HCT116 (cell line): ENCODE measurements at regions of chr1 and their contacts with region 1.

Region 1: DNA sequence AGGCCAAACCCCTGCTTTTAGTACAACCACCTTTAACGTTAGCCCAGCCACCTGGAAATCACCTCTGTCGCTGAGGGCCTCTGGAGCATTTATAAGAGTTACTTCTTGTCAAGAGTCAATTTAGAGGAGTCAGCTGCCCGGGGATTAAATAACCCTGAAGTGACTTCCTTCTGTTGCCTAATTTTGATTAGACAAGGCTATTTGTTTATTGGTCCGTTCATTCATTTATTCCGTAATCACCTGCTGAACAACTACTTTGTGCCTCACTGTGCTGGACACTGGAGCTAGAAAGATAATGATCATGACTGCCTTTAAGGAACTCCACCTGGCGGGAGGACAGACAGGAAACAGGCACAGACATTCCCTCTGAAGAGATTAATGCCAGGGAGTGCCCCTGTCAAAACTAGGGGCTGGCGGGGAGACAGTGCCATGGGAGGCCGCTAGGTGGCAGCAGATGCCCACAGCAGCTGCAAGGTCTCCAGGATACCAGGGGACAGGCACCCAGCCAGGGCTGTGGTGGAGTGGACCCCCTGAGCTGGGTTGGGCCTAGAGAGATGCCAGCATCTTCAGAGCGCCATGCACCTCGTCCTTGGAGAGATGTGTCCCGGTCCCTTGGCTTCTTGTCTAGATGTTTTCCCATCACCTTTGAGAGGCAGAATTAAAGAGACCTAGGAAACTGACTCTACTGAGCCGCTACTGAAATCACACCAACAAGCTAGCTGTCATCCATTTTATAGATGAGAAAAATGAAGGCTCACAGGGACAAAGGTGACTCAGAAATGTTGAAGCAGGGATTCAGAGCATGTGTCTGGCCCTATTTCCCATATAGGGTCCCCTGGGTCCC is 3.7 kb downstream of the REN start:
- DNase-seq: peak; percentile 70
- ATAC-seq: peak; percentile 98
- H3K4me3 ChIP-seq: no peak overlapping the region
- H3K27ac ChIP-seq: no peak overlapping the region
- H3K4me1 ChIP-seq: peaks cover 0 to 15% of the 10 kb centered on the region in 2 experiments; a peak in 2 of 4 replicates
- H3K27me3 ChIP-seq: no peaks in the 10 kb centered on the region
- CTCF ChIP-seq: peak; percentile 98 to 99 (median 99)
- POLR2A ChIP-seq: no peak
- RAD21 ChIP-seq: peak; percentile 100

Region 2: DNA sequence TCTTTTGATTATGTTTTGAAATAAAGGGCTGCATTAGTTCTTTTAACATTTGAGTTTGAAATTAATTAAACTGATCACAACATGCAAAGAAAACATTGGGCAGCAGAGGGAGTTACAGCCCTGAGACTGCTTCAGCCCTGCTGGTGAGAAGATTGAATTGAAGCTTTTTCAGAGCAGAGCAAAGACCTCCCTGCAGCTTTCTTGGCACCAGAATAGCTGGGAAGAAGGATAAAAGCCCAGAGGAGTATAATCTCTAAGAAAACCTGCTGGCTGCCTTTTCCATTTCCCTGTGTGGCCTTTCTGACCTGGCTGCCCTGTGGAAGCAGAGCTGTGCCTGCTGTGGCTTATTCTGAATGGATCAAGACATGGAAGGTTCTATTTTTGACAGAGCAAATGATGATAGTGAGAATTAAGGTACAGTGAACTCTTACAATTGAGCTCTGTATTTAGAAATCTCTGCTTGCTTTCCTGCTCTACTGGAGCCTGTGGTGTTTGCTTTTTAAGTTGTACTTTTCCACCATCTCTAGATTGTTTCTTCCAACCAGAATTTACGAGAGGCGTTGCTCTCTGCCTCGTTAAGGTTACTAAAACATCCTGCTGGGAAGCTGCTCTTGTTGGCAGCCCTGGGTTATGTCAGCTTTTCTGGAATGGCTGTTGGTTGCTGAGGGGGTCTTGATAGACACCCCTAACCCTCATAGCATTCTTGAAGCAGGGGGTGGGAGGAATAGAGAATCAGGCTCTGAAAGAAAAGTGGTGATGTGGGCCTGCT is 291.2 kb before region 1 on chr1:
- CTCF ChIA-PET with region 1: interaction called, 12 read pairs
- POLR2A ChIA-PET with region 1: no interaction called
- RAD21 ChIA-PET with region 1: no interaction called
- intact Hi-C with region 1: no loop called
- DNase-seq: peak; percentile 62
- ATAC-seq: peak; percentile 86
- H3K4me3 ChIP-seq: no peak overlapping the region
- H3K27ac ChIP-seq: no peak overlapping the region
- H3K4me1 ChIP-seq: no peaks in the 10 kb centered on the region
- H3K27me3 ChIP-seq: no peaks in the 10 kb centered on the region
- CTCF ChIP-seq: peak; percentile 84 to 98 (median 97)
- POLR2A ChIP-seq: no peak
- RAD21 ChIP-seq: peak; percentile 99

Region 3: DNA sequence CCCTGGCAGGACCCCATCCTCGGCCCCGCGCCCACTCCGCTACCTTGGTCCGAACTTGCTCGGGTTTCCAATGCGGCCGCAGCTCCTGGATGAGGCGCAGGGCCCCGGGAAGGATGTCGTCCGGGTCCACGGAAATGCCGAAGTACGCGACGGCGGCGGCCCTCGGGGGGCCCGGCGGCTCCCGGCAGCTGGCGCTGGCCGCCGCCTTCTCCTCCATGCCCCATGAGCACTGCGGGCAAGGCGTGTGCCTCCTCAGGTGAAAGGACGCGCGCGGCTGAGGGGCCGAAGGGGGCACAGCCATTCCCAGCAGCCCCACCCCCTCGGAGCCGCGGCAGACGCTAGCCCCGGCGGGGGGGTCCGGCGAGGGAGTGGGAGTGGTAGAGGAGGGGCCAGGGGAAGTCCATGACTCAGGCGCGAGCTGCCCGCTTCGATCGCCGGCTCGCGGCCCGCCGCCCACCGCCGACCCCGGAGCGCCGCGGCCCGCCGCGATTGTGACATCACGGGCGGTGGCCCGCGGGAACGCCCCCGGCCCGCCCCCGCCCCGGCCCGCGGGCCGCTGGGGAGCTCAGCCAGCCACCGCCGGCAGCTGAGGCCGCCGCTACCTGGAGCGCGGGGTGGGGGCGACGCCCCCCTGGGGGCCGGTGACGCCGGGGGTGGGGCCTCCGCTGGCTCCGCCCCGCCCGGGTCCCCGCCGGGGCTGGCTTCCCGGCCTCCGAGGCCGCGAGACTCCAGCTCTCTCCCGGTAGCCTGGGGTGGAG is 10.7 kb before region 1 on chr1 and contains the start of gene ETNK2:
- CTCF ChIA-PET with region 1: interaction called, 18 read pairs
- POLR2A ChIA-PET with region 1: no interaction called
- RAD21 ChIA-PET with region 1: interaction called in 1 of 2 experiments, 3 read pairs
- intact Hi-C with region 1: no loop called
- DNase-seq: no peak
- ATAC-seq: peak; percentile 85
- H3K4me3 ChIP-seq: peak within 1 kb of the TSS; percentile 51 to 71
- H3K27ac ChIP-seq: peak within 1 kb of the TSS; percentile 57; the same call in 1 of the 2 replicates
- H3K4me1 ChIP-seq: peaks cover 8 to 27% of the 10 kb centered on the region in 2 experiments
- H3K27me3 ChIP-seq: no peaks in the 10 kb centered on the region
- CTCF ChIP-seq: no peak
- POLR2A ChIP-seq: no peak
- RAD21 ChIP-seq: no peak
- total RNA-seq, gene ETNK2: 16.1 TPM

Region 4: DNA sequence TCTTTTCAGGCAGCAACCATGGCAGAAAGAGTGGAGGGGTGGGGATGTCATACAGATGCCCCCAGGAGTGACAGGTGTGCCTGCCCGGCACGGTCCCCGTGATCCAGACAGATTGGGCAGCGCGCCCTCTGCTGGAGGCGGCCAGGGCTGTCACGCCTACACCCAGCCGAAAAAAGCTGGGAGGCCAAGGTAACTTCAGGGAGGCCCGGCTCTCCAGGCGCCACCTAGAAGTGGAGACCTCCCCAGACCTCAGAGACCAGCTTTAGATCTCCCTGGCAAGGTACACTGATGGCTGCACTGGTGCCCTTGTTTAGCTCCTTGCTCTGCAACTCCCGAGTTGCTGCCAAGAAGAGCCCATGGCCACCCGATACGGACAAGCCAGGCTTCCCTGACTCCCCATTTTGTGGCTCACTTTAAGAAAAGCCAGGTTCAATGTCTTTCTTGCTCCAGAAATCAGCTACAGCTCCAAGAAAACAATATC is 44.7 kb after region 1 on chr1:
- CTCF ChIA-PET with region 1: interaction called, 53 read pairs
- POLR2A ChIA-PET with region 1: no interaction called
- RAD21 ChIA-PET with region 1: interaction called, 6 to 17 read pairs
- intact Hi-C with region 1: loop called (anchors 1 kb)
- DNase-seq: peak; percentile 18
- ATAC-seq: peak; percentile 99
- H3K4me3 ChIP-seq: no peak overlapping the region
- H3K27ac ChIP-seq: no peak overlapping the region
- H3K4me1 ChIP-seq: peaks cover 8 to 27% of the 10 kb centered on the region in 2 experiments
- H3K27me3 ChIP-seq: no peaks in the 10 kb centered on the region
- CTCF ChIP-seq: peak; percentile 87 to 95 (median 91)
- POLR2A ChIP-seq: no peak
- RAD21 ChIP-seq: peak; percentile 79

Region 5: DNA sequence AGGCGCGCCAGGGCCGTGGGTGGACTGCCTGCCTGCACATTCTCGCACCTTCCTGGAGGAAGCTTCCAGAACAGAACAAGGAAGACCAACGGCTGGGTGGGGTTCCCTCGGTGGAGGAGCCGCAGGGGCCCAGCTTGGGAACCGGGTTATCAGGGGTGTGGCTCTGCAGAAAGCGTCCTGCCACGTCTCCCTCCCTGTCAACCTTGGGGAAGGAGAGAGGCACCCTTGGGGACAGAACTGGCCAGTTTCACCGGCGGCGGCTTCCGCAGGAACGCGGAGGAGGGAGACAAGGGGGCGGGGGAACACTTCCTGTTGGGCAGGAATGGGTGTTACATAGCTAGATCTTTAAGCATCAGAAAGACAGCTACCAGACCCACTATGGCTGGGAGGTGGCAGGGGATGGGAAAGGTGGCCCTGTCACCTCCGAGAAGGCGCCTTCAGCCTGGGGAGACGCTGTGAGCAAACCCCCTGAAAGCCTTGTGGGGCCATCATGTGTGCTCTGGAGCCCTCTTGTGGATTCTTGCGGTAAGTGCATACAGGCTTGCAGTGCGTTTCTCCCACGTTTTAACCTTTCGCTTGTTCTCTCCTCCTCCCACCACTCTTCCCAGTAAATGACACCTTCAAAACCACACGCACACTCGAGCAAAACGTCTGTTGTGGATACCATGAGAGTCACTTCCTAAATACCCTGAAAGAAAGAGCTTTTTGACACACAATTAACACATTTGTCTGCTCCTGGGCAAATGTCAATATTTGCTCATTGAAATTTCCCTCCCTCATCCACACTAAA is 201.1 kb after region 1 on chr1:
- CTCF ChIA-PET with region 1: interaction called, 51 read pairs
- POLR2A ChIA-PET with region 1: no interaction called
- RAD21 ChIA-PET with region 1: interaction called in 1 of 2 experiments, 5 read pairs
- intact Hi-C with region 1: loop called (anchors 1 kb)
- DNase-seq: peak; percentile 54
- ATAC-seq: peak; percentile 74
- H3K4me3 ChIP-seq: peak overlapping the region; percentile 10 to 26
- H3K27ac ChIP-seq: no peak overlapping the region; the same call in 1 of the 2 replicates
- H3K4me1 ChIP-seq: peaks cover 6 to 20% of the 10 kb centered on the region in 2 experiments; a peak in 3 of 4 replicates
- H3K27me3 ChIP-seq: no peaks in the 10 kb centered on the region
- CTCF ChIP-seq: peak; percentile 94 to 96 (median 95)
- POLR2A ChIP-seq: peak; percentile 9
- RAD21 ChIP-seq: peak; percentile 99